Activated CD8-positive, alpha-beta T cell treated with anti-CD3 and anti-CD28 coated beads, Interleukin-2, amount 10 ng/mL, durations not matched to agents 7 days and 5 days (primary cell): ENCODE measurements at regions of chr1 and their contacts with region 1.

Region 1: GRCh38 chr1:11645670-11646265 is 8.5 kb downstream of the FBXO2 start:
- DNase-seq: peak; percentile 91
- ATAC-seq: peak; percentile 55
- H3K4me3 Mint-ChIP-seq: no peak overlapping the region
- H3K27ac Mint-ChIP-seq: no peak overlapping the region
- H3K4me1 Mint-ChIP-seq: peaks cover 16% of the 10 kb centered on the region
- H3K27me3 Mint-ChIP-seq: peaks cover 2% of the 10 kb centered on the region

Region 2: DNA sequence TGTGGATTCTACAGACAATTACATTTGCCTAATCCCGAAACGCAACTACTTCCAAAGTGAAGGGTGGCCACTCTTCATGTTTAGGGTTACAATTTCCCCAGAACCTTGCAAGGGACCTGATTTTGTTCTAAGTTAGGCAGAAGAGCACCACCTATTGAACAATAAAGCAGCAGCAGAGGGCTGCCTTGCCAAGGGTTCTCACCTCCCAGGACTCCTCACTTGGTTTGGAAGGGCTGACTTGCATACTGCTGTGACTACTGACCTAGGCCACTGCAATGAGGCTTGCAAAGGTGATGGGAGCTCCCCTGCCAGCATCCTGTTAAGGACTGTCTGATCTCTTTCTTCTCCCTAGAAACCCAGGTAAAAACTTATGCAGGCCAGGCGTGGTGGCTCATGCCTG is 397.6 kb before region 1 on chr1:
- CTCF ChIA-PET with region 1: interaction called, 39 read pairs
- POLR2A ChIA-PET with region 1: no interaction called
- DNase-seq: no peak
- ATAC-seq: no peak
- H3K4me3 Mint-ChIP-seq: no peak overlapping the region
- H3K27ac Mint-ChIP-seq: peak overlapping the region; percentile 28
- H3K4me1 Mint-ChIP-seq: peaks cover 2% of the 10 kb centered on the region
- H3K27me3 Mint-ChIP-seq: no peaks in the 10 kb centered on the region

Region 3: GRCh38 chr1:11337580-11338073 is 308.1 kb before region 1 on chr1:
- CTCF ChIA-PET with region 1: interaction called, 13 read pairs
- POLR2A ChIA-PET with region 1: no interaction called
- DNase-seq: peak; percentile 84
- ATAC-seq: peak; percentile 87
- H3K4me3 Mint-ChIP-seq: no peak overlapping the region
- H3K27ac Mint-ChIP-seq: no peak overlapping the region
- H3K4me1 Mint-ChIP-seq: peaks cover 17% of the 10 kb centered on the region
- H3K27me3 Mint-ChIP-seq: peaks cover 27% of the 10 kb centered on the region

Region 4: DNA sequence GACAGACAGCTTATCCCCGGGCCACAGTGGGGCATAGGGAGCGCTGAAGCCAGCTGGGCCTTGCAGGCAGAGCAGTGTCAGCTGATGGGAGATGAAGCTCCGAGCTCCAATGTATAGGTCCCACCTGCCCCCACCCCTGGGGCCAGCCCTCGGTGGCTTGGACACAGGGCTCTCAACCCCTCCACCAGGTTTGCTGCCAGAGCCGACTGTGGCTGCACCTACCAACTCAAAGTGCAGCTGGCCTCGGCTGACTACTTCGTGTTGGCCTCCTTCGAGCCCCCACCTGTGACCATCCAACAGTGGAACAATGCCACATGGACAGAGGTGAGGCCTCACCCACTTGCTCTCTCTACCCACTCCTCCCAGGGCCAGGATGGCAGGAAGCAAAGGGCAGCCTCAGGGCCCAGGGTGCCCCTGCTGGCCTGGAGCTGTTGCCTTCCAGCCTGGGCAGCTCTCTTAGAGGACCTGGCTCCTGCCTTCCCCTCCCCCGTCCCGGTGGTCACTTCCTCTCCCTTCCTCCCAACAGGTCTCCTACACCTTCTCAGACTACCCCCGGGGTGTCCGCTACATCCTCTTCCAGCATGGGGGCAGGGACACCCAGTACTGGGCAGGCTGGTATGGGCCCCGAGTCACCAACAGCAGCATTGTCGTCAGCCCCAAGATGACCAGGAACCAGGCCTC is 27.5 kb after region 1 on chr1:
- CTCF ChIA-PET with region 1: no interaction called
- POLR2A ChIA-PET with region 1: no interaction called
- DNase-seq: no peak
- ATAC-seq: no peak
- H3K4me3 Mint-ChIP-seq: no peak overlapping the region
- H3K27ac Mint-ChIP-seq: no peak overlapping the region
- H3K4me1 Mint-ChIP-seq: peaks cover 9% of the 10 kb centered on the region
- H3K27me3 Mint-ChIP-seq: no peaks in the 10 kb centered on the region

Region 5: DNA sequence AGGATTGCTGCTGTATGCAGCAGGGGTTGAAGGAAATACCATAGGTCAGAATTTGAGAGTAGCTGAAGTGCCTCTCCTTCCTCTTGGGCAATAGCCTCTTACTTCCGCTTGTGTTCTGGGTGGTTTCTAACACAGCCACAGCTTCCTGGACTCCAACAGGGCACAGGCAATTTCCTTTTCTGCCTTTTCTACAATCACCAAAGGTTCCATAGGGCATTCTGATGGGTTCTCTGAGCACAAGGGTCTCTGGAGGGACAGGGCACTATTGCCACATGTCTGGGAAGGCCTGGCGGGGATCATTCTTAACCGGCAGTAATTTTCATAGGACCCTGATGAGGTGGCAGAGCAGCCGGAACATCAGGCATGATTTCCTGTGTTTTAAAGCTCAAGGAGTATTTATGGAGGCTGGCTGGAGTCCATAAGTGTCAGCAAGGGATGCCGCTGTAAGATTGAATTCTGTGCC is 84.7 kb after region 1 on chr1:
- CTCF ChIA-PET with region 1: interaction called, 23 read pairs
- POLR2A ChIA-PET with region 1: no interaction called
- DNase-seq: peak; percentile 81
- ATAC-seq: peak; percentile 82
- H3K4me3 Mint-ChIP-seq: peak overlapping the region; percentile 61
- H3K27ac Mint-ChIP-seq: peak overlapping the region; percentile 79
- H3K4me1 Mint-ChIP-seq: peaks cover 60% of the 10 kb centered on the region
- H3K27me3 Mint-ChIP-seq: no peaks in the 10 kb centered on the region

Region 6: DNA sequence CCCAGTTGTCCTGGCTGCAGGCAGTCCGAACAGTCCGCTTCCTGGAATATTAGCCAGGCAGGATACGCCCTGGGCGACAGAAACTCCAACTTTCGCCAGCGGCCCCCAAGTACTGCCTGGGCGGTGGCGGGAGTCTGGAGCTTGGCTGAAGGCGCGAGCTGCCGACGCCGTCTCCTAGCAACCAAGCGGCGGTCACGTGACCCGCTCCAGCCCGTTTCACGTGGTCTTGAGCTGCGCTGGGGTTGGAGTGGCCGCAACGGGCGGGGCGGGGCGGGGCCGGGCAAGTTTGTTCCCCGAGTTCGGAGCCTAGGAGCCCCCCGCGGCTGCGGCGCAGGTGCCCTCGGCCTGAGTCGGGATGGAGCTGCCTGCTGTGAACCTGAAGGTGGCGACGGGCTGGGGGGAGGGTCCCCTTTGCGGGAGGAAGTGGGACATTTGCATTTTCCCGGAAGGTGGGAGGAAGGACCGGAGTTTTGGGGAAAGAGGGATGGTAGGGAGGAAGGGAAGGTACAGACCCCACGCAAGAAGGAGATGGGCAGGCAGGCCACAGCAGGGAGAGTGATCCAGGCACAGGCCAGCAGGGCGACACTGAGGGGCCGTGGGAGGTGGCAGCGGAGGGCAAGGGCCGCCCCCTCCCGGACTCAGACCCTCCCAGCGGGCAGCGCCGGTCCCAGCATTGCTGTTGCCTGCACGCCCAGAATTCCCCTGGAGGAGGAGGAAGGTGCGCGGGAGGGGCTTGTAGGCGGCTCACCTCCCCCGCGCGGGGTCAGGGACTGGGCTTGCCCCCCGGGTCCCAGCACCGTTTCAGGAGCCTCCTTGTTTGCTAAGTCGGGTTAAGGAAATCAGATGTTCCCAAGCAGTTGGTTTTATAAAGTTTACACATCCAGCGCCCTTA is 90.3 kb after region 1 on chr1 and contains the start of gene AGTRAP:
- CTCF ChIA-PET with region 1: interaction called, 23 read pairs
- POLR2A ChIA-PET with region 1: no interaction called
- DNase-seq: peak; percentile 94
- ATAC-seq: peak; percentile 81
- H3K4me3 Mint-ChIP-seq: peak within 1 kb of the TSS; percentile 98
- H3K27ac Mint-ChIP-seq: peak within 1 kb of the TSS; percentile 91
- H3K4me1 Mint-ChIP-seq: peaks cover 74% of the 10 kb centered on the region
- H3K27me3 Mint-ChIP-seq: no peaks in the 10 kb centered on the region
- total RNA-seq, gene AGTRAP: 82.5 to 84.2 TPM